Panc1 (cell line): ENCODE measurements at regions of chrX and their contacts with region 1.

Region 1: DNA sequence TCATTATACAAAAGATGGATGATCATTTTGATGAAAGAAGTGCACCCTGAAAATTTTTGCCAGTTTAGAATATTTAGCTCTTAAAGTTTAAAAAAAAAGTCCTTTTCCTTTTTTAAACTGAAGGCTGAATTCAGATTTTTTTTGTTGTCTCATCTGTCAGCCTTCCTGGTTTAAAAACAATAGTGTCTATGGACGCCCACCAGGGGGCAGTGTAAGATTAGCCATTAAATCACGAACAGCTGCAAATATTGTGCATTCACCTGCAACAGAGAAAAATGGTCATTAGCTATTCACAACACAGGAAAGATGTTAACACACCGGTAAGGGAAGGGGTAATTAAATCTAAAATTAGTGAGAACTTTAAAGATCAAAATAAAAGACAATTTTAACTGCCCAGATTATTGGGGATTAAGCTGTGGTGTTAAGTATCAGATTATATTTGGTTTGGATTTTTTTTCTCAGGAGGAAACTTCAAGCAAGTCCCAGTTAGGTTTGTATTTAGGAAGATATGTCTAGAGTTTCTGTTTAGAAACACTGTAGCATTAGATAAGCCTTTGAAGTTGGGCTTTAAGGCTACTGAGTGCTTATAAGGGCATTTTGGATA is 4.4 kb upstream of the CXorf38 start:
- DNase-seq: no peak
- ATAC-seq: no peak
- H3K4me3 ChIP-seq: no peak overlapping the region
- H3K27ac ChIP-seq: no peak overlapping the region
- H3K4me1 ChIP-seq: no peaks in the 10 kb centered on the region
- H3K27me3 ChIP-seq: no peaks in the 10 kb centered on the region
- CTCF ChIP-seq: peak; percentile 65; the same call in 1 of the 2 replicates

Region 2: DNA sequence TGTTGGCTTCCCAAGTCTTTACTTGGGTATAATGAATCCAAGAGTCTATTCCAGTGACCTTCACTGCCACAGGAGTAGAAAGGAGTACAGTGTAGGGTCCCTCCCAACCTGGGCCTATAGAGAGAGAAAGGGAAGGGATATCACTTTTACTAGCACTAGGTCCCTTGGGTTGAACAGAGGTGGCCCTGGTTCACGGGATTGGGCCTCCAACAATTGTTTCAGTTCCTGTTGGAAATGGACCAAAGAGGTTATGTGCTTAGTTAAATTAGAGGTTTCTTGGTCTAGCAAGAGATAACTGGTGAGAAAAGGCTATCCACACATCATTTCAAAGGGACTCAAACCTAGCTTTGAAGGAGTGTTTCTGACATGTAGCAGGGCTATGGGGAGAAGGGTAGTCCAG is 140.7 kb after region 1 on chrX:
- CTCF ChIA-PET with region 1: no interaction called
- POLR2A ChIA-PET with region 1: no interaction called
- in situ Hi-C with region 1: no loop called
- intact Hi-C with region 1: loop called (anchors 5 kb)
- DNase-seq: no peak
- ATAC-seq: no peak
- H3K4me3 ChIP-seq: no peak overlapping the region
- H3K27ac ChIP-seq: no peak overlapping the region
- H3K4me1 ChIP-seq: no peaks in the 10 kb centered on the region
- H3K27me3 ChIP-seq: no peaks in the 10 kb centered on the region
- CTCF ChIP-seq: no peak

Region 3: GRCh38 chrX:40821780-40822179 is 170.1 kb after region 1 on chrX:
- CTCF ChIA-PET with region 1: no interaction called
- POLR2A ChIA-PET with region 1: no interaction called
- in situ Hi-C with region 1: no loop called
- intact Hi-C with region 1: no loop called
- DNase-seq: no peak
- ATAC-seq: no peak
- H3K4me3 ChIP-seq: no peak overlapping the region
- H3K27ac ChIP-seq: no peak overlapping the region
- H3K4me1 ChIP-seq: no peaks in the 10 kb centered on the region
- H3K27me3 ChIP-seq: no peaks in the 10 kb centered on the region
- CTCF ChIP-seq: no peak

Region 4: GRCh38 chrX:41090568-41091238 is 439.0 kb after region 1 on chrX:
- CTCF ChIA-PET with region 1: no interaction called
- POLR2A ChIA-PET with region 1: no interaction called
- in situ Hi-C with region 1: no loop called
- intact Hi-C with region 1: loop called (anchors 10 kb)
- DNase-seq: no peak
- ATAC-seq: no peak
- H3K4me3 ChIP-seq: no peak overlapping the region
- H3K27ac ChIP-seq: no peak overlapping the region
- H3K4me1 ChIP-seq: peaks cover 14% of the 10 kb centered on the region
- H3K27me3 ChIP-seq: no peaks in the 10 kb centered on the region
- CTCF ChIP-seq: no peak